ENCODE measurements at regions of chr4 and their contacts with region 1.

Region 1: GRCh38 chr4:39469429-39470077 is 10.7 kb downstream of the LIAS start:
- DNase-seq: peak; percentile 87
- ATAC-seq: peak; percentile 83
- H3K4me3 ChIP-seq: no peak overlapping the region
- H3K27ac ChIP-seq: no peak overlapping the region
- H3K4me1 ChIP-seq: no peaks in the 10 kb centered on the region
- H3K27me3 ChIP-seq: no peaks in the 10 kb centered on the region
- CTCF ChIP-seq: peak; percentile 97
- POLR2A ChIP-seq: no peak
- RAD21 ChIP-seq: peak; percentile 87

Region 2: GRCh38 chr4:39591290-39591689 is 121.7 kb after region 1 on chr4:
- CTCF ChIA-PET with region 1: interaction called, 4 read pairs
- POLR2A ChIA-PET with region 1: no interaction called
- dilution Hi-C with region 1: no loop called
- in situ Hi-C with region 1: no loop called
- intact Hi-C with region 1: loop called (anchors 1 kb)
- DNase-seq: peak; percentile 50
- ATAC-seq: peak; percentile 54
- H3K4me3 ChIP-seq: no peak overlapping the region
- H3K27ac ChIP-seq: no peak overlapping the region
- H3K4me1 ChIP-seq: peaks cover 5% of the 10 kb centered on the region; the same call in 1 of the 2 replicates
- H3K27me3 ChIP-seq: no peaks in the 10 kb centered on the region
- CTCF ChIP-seq: peak; percentile 47
- POLR2A ChIP-seq: no peak
- RAD21 ChIP-seq: peak; percentile 62

Region 3: DNA sequence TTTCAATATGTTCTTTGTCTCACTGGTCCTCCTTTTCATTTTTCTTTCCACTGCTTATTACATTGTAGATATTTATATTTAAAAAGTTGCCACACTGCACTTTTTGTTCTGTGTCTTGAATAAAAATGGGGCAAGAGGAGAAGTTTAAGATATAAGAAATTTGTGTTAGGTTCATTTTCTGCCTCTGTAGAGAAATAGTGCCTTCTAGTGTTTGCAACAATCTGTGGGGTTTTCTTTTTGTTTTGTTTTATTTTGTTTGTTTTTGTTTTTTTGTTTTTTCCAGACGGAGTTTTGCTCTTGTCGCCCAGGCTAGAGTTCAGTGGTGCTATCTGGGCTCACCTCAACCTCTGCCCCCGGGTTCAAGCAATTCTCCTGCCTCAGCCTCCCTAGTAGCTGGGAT is 189.2 kb after region 1 on chr4:
- CTCF ChIA-PET with region 1: interaction called, 6 read pairs
- POLR2A ChIA-PET with region 1: no interaction called
- dilution Hi-C with region 1: no loop called
- in situ Hi-C with region 1: no loop called
- intact Hi-C with region 1: loop called (anchors 1 kb)
- DNase-seq: peak; percentile 7
- ATAC-seq: no peak
- H3K4me3 ChIP-seq: no peak overlapping the region
- H3K27ac ChIP-seq: no peak overlapping the region
- H3K4me1 ChIP-seq: no peaks in the 10 kb centered on the region; the same call in 1 of the 2 replicates
- H3K27me3 ChIP-seq: no peaks in the 10 kb centered on the region
- CTCF ChIP-seq: peak; percentile 66
- POLR2A ChIP-seq: no peak
- RAD21 ChIP-seq: peak; percentile 61

Region 4: GRCh38 chr4:39977489-39978377 is 508.2 kb after region 1 on chr4 and contains the start of gene PDS5A:
- CTCF ChIA-PET with region 1: interaction called, 4 read pairs
- POLR2A ChIA-PET with region 1: no interaction called
- dilution Hi-C with region 1: no loop called
- in situ Hi-C with region 1: loop called (anchors 10 kb)
- intact Hi-C with region 1: loop called (anchors 1 kb)
- DNase-seq: peak; percentile 84
- ATAC-seq: peak; percentile 89
- H3K4me3 ChIP-seq: peak within 1 kb of the TSS; percentile 96
- H3K27ac ChIP-seq: peak within 1 kb of the TSS; percentile 91
- H3K4me1 ChIP-seq: peaks cover 2% of the 10 kb centered on the region
- H3K27me3 ChIP-seq: no peaks in the 10 kb centered on the region
- CTCF ChIP-seq: peak; percentile 99
- POLR2A ChIP-seq: peak; percentile 62
- RAD21 ChIP-seq: peak; percentile 71
- total RNA-seq, gene PDS5A: 33.5 and 53.0 TPM in 2 replicates